Activated B cell treated with CpG ODN at 0.5 μM for 24 hours (primary cell): ENCODE measurements at regions of chr1 and their contacts with region 1.

Region 1: GRCh38 chr1:181142096-181142958 is 53.8 kb downstream of the IER5 start:
- DNase-seq: peak; percentile 86
- ATAC-seq: peak; percentile 95
- H3K4me3 Mint-ChIP-seq: peak overlapping the region; percentile 72
- H3K27ac Mint-ChIP-seq: peak overlapping the region; percentile 76
- H3K4me1 Mint-ChIP-seq: peaks cover 48% of the 10 kb centered on the region
- H3K27me3 Mint-ChIP-seq: no peaks in the 10 kb centered on the region
- CTCF ChIP-seq: peak; percentile 79

Region 2: DNA sequence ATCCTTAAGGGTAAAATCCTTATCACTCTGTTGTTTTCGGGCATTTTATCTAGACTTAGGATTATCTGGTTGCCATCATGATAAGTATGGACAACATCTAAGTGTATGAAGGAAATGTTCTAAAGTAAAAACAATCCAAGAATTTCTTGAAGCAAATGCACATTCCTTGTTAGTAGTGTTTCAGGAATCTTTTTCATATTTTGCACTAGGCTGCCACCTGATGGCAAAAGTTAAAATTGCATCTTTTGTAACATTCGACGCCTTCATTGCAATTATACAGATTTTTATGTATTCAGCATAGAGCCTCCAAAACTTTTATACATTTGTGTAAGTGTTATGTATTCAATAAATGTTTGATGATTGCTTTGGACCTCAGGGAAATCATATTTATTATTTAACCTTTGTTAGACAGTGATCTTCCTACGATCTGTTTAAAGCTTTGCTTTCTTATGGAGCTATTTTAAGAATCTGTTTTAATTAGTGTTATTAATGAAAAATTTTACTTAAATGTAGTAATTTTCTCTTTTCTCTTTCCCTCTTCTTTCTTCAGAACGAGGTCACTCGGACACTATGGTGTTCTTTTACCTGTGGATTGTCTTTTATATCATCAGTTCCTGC is 279.1 kb before region 1 on chr1:
- CTCF ChIA-PET with region 1: interaction called, 14 read pairs
- POLR2A ChIA-PET with region 1: no interaction called
- intact Hi-C with region 1: no loop called
- DNase-seq: no peak
- ATAC-seq: no peak
- H3K4me3 Mint-ChIP-seq: no peak overlapping the region
- H3K27ac Mint-ChIP-seq: no peak overlapping the region
- H3K4me1 Mint-ChIP-seq: no peaks in the 10 kb centered on the region
- H3K27me3 Mint-ChIP-seq: no peaks in the 10 kb centered on the region
- CTCF ChIP-seq: peak; percentile 92

Region 3: DNA sequence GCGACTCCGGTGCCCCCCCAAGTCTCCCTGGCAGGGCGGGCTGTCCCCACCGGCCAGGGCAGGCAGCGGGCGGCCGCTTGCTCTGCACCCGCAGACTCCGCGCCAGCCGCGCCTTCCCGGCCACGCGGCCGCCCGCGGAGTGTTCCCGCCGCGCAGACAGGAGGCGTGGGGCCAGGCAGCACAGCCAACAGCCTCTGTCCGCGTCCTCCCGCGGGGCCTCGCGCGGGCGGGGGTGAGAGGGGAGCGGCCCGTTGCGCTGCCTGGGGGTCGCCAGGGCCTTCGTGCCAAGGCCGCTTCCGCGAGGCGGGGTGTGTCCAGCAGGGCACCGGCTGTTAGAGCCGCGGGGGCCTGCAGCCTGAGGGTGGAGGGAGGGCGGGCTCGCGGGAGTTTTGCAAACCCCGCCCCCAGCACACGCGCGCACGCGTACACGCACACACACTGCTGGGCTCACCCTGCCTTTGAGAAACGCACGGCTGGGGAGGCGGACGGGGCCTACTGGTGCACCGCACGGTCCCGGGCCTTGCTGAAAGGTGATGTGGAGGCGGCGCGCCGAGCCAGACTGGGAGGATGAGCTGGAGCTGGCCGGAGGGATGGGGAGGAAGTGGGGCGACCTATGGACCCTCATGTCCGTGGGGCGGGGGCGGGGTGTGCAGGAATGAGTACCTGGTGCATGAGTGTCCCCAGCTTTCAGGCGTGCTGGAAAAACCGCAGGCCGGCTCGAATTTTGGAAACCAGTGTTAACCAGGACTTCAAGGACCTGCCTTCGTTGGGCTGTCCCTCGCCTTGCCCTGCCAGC is 188.1 kb before region 1 on chr1:
- CTCF ChIA-PET with region 1: no interaction called
- POLR2A ChIA-PET with region 1: no interaction called
- intact Hi-C with region 1: loop called (anchors 5 kb)
- DNase-seq: peak; percentile 46
- ATAC-seq: peak; percentile 89
- H3K4me3 Mint-ChIP-seq: peak overlapping the region; percentile 68
- H3K27ac Mint-ChIP-seq: no peak overlapping the region
- H3K4me1 Mint-ChIP-seq: peaks cover 3% of the 10 kb centered on the region
- H3K27me3 Mint-ChIP-seq: no peaks in the 10 kb centered on the region
- CTCF ChIP-seq: no peak

Region 4: DNA sequence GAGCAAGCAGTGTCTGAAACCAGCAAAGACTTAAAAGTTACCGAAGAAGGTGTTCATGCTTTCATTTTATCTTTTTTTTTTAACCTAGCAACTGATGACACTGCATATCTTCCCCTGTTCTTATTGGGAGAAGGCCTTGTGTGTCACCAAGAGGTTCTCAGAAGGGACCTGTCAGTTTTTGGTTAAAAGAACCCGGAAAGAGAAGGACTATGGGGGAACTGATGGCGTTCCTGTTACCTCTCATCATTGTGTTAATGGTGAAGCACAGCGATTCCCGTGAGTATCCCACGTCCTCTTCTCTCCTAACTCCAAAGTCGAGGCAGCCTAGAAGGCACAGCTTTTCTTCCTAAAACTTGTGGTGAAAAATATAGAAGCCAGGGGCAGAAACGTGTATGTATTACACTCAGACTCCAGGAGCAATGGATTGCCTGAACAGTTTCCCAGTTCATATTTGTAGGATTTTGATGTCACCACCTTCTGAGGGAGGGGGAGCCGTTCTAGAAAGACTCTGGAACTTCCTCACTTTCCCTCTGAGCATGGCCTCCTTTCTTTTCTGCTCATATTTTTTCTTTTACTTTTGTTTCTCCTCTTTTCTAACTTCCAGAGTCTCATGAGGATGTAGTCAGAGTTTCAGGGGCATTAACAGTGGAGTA is 108.4 kb before region 1 on chr1 and contains the start of gene MR1:
- CTCF ChIA-PET with region 1: interaction called, 112 read pairs
- POLR2A ChIA-PET with region 1: interaction called, 10 read pairs
- intact Hi-C with region 1: loop called (anchors 1 kb)
- DNase-seq: no peak
- ATAC-seq: peak; percentile 96
- H3K4me3 Mint-ChIP-seq: peak within 1 kb of the TSS; percentile 98
- H3K27ac Mint-ChIP-seq: peak within 1 kb of the TSS; percentile 99
- H3K4me1 Mint-ChIP-seq: peaks cover 60% of the 10 kb centered on the region
- H3K27me3 Mint-ChIP-seq: no peaks in the 10 kb centered on the region
- CTCF ChIP-seq: no peak
- total RNA-seq, gene MR1: 24.3 and 24.8 TPM in 2 replicates

Region 5: DNA sequence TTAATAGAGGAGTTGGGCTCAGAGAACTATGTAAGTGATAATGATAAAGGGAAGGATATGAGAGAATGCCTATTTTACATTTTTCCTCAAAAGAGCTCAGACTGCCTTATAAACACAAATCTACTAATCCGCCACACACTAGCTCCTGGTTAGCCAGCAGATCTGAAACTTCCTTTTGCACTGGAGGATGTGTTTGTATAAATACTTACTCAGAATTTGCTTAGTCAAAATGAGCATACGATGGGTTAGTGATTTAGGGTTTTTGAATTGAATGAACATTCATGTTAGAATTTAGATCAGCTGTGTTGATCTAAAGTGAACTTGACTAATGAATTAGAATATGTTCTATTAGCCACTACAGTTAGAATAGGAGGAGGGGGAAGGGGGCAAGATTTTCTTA is 62.9 kb before region 1 on chr1:
- CTCF ChIA-PET with region 1: interaction called, 194 read pairs
- POLR2A ChIA-PET with region 1: interaction called, 1,783 read pairs
- intact Hi-C with region 1: loop called (anchors 1 kb)
- DNase-seq: no peak
- ATAC-seq: no peak
- H3K4me3 Mint-ChIP-seq: no peak overlapping the region
- H3K27ac Mint-ChIP-seq: no peak overlapping the region
- H3K4me1 Mint-ChIP-seq: peaks cover 11% of the 10 kb centered on the region
- H3K27me3 Mint-ChIP-seq: peaks cover 21% of the 10 kb centered on the region
- CTCF ChIP-seq: no peak

Region 6: GRCh38 chr1:181128592-181129497 is 13.5 kb before region 1 on chr1:
- CTCF ChIA-PET with region 1: interaction called, 17 read pairs
- POLR2A ChIA-PET with region 1: interaction called, 63 read pairs
- intact Hi-C with region 1: loop called (anchors 1 kb)
- DNase-seq: peak; percentile 60
- ATAC-seq: peak; percentile 60
- H3K4me3 Mint-ChIP-seq: peak overlapping the region; percentile 90
- H3K27ac Mint-ChIP-seq: peak overlapping the region; percentile 94
- H3K4me1 Mint-ChIP-seq: peaks cover 90% of the 10 kb centered on the region
- H3K27me3 Mint-ChIP-seq: no peaks in the 10 kb centered on the region
- CTCF ChIP-seq: no peak

Region 7: DNA sequence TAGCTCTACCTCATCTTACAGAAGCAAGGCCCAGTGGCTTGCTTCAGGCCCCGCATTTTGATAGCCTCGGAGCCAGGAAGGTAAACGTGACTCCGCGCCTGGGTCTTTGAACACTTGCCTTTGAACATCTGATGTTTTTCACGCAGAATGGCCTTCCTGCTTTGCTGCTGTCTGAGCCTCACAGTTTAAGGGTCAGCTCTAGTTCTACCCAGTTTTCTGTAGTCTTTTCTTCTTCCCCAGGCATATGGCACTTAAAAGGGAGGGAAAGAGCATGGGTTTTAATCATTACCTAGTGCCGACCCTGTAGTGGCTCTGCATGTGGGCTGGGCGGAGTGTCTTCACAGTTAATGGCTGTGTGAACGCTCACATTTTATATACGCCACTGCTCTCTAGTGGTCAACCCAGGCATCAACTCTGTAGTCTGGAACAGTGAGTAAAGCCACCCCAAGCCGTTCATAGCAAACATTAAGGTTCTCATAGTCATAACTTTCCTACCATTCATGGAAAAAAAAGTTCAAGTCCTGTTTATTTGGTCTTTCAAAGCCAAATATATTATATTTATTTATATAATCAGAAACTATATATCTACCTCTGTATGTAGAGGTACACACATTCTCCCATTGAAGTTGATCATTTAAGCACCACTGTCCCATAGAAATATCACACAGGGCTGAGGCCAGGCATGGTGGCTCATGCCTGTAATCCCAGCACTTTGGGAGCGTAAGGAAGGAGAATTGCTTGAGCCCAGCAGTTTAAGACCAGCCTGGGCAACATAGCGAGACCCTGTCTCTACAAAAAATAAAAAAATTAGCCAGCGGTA is 24.3 kb after region 1 on chr1:
- CTCF ChIA-PET with region 1: interaction called, 24 read pairs
- POLR2A ChIA-PET with region 1: no interaction called
- intact Hi-C with region 1: loop called (anchors 1 kb)
- DNase-seq: peak; percentile 29
- ATAC-seq: peak; percentile 100
- H3K4me3 Mint-ChIP-seq: no peak overlapping the region
- H3K27ac Mint-ChIP-seq: no peak overlapping the region
- H3K4me1 Mint-ChIP-seq: peaks cover 3% of the 10 kb centered on the region
- H3K27me3 Mint-ChIP-seq: peaks cover 2% of the 10 kb centered on the region
- CTCF ChIP-seq: peak; percentile 74

Region 8: DNA sequence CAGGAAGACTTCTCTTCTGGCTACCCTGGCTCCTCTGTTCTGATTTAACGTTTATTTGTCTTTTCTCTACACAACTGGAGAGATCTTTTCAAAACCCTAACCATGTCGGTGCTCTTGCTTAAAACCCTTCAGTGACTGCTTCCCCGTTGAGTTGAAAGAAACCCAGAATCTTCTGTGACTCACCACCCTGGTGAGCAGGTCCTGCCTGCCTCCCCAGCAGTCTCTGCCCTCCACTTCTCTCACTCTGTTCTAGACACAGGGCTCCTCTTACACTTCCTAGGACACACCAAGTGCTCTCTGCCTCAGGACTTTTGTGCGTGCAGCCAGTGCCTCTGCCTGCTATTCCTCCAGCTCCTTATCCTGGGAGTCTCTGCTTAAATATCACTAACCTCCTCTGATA is 77.6 kb after region 1 on chr1:
- CTCF ChIA-PET with region 1: no interaction called
- POLR2A ChIA-PET with region 1: no interaction called
- intact Hi-C with region 1: no loop called
- DNase-seq: no peak
- ATAC-seq: no peak
- H3K4me3 Mint-ChIP-seq: no peak overlapping the region
- H3K27ac Mint-ChIP-seq: no peak overlapping the region
- H3K4me1 Mint-ChIP-seq: no peaks in the 10 kb centered on the region
- H3K27me3 Mint-ChIP-seq: peaks cover 19% of the 10 kb centered on the region
- CTCF ChIP-seq: no peak

Region 9: GRCh38 chr1:182249201-182249676 is 1106.9 kb after region 1 on chr1:
- CTCF ChIA-PET with region 1: no interaction called
- POLR2A ChIA-PET with region 1: no interaction called
- intact Hi-C with region 1: no loop called
- DNase-seq: no peak
- ATAC-seq: no peak
- H3K4me3 Mint-ChIP-seq: no peak overlapping the region
- H3K27ac Mint-ChIP-seq: no peak overlapping the region
- H3K4me1 Mint-ChIP-seq: no peaks in the 10 kb centered on the region
- H3K27me3 Mint-ChIP-seq: peaks cover 9% of the 10 kb centered on the region
- CTCF ChIP-seq: no peak